ENCODE measurements at regions of chr12 and their contacts with region 1.

Region 1: GRCh38 chr12:27733052-27733656 is 22.5 kb downstream of the MRPS35 start:
- DNase-seq: peak; percentile 28
- CTCF ChIP-seq: peak; percentile 87

Region 2: DNA sequence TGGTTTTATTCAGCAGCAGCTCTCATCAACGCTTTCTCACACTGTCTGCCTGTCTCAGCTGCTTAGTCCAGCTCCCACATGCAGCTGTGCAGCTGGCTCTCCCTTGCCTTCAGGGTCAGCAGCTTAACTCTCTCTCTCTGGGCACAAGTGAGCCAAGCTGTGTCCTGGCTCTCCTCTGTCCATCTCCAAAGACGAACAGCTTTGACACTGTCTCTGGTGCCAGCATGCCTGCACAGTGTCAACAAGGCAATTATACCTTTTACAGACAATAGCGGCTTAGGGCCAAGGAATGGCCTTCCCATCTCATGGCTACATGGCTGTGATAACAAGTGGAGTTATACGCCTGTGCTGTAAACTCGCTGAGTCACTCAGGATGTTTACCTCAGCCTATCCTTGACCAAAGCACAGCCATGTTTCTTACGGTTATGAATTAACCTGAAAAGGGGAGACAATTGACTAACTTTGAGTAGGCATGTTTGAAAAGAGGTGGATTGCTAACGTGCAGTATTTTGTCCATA is 85.3 kb after region 1 on chr12:
- in situ Hi-C with region 1: loop called (anchors 10 kb)
- DNase-seq: no peak
- CTCF ChIP-seq: no peak

Region 3: GRCh38 chr12:27940756-27941402 is 207.7 kb after region 1 on chr12:
- in situ Hi-C with region 1: loop called (anchors 25 kb)
- DNase-seq: peak; percentile 67
- CTCF ChIP-seq: peak; percentile 89

Region 4: DNA sequence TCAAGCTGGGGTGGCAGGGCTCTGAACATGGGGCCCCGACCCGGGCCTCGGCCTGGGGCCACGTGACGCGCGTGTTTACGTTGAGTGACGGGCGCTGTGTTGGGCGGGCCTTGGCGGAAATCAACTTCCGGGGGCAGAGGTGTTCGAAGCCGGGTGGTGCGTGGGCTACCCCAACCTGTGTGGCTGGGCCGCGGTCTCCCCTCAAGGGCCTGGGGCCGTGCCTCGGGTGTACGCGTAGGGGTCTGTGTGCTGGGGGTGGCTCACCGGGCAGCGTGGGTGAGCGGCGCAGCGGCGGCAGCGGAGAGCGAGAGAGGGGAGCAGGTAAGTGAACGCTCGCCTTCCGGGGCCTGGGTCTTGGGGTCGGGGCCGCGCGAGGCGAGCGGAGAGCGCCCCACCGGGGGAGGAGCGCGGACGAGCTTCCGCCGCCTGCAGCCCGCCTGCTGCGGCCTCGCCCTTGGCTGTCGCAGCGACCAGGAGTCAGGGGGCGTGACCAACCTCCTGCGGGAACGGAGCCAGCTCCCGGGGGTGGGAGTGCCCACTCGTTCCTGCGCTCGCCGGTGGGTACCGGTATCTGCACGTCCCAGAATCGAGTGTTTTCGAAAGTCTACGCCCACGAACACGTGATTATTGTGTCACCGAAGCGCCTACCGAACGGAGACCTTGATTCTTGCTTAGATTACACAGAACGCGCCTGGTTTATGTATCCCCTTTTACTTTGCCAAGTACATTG is 457.3 kb after region 1 on chr12 and contains the start of gene CCDC91:
- in situ Hi-C with region 1: loop called (anchors 25 kb)
- DNase-seq: peak; percentile 87
- CTCF ChIP-seq: no peak

Region 5: GRCh38 chr12:28872654-28873268 is 1139.6 kb after region 1 on chr12:
- in situ Hi-C with region 1: loop called (anchors 25 kb)
- DNase-seq: peak; percentile 35
- CTCF ChIP-seq: peak; percentile 79

Measured in GM13977 (cell line).